ENCODE measurements at regions of chr5 and their contacts with region 1.

Region 1: GRCh38 chr5:95808686-95809413 is 13.7 kb downstream of the GLRX start:
- DNase-seq: peak; percentile 95
- ATAC-seq: peak; percentile 100
- H3K4me3 ChIP-seq: peak overlapping the region in 3 of 5 experiments; percentile 27 to 39 (median 33)
- H3K4me3 Mint-ChIP-seq: peak overlapping the region; percentile 86
- H3K27ac ChIP-seq: peak overlapping the region; percentile 81 to 97
- H3K27ac Mint-ChIP-seq: peak overlapping the region; percentile 97
- H3K4me1 ChIP-seq: peaks cover 34 to 37% of the 10 kb centered on the region in 2 donors
- H3K4me1 Mint-ChIP-seq: peaks cover 58% of the 10 kb centered on the region
- H3K27me3 ChIP-seq: no peaks in the 10 kb centered on the region
- H3K27me3 Mint-ChIP-seq: no peaks in the 10 kb centered on the region
- CTCF ChIP-seq: no peak

Region 2: DNA sequence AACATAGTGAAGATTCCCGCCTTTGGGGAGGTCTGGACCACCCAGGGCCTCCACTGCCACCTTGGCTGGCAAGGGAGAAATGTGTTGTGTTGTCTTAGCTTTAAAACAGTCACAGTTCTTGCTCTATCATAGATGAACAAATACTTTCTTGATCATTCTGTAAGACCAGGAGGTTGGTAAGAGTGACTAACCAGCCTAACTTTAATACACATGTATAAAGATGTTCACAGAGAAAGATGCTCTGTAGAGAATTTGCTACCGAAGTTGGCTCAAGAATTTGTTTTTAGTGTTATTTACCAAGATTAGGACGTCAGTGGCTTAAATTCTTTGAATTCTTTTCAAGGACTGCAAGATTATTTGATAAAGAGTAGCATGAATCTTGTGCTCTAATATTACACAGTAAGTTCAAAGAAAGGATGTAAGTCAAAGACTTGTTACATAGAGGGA is 14.8 kb before region 1 on chr5:
- CTCF ChIA-PET with region 1: interaction called, 3 read pairs
- POLR2A ChIA-PET with region 1: interaction called, 11 read pairs
- intact Hi-C with region 1: no loop called
- DNase-seq: no peak
- ATAC-seq: no peak
- H3K4me3 ChIP-seq: no peak overlapping the region
- H3K4me3 Mint-ChIP-seq: no peak overlapping the region
- H3K27ac ChIP-seq: no peak overlapping the region
- H3K27ac Mint-ChIP-seq: no peak overlapping the region
- H3K4me1 ChIP-seq: no peaks in the 10 kb centered on the region
- H3K4me1 Mint-ChIP-seq: peaks cover 4% of the 10 kb centered on the region
- H3K27me3 ChIP-seq: no peaks in the 10 kb centered on the region
- H3K27me3 Mint-ChIP-seq: no peaks in the 10 kb centered on the region
- CTCF ChIP-seq: no peak

Region 3: GRCh38 chr5:95822542-95823181 is 13.8 kb after region 1 on chr5 and contains the start of gene GLRX:
- CTCF ChIA-PET with region 1: interaction called, 68 read pairs
- POLR2A ChIA-PET with region 1: interaction called, 36 read pairs
- intact Hi-C with region 1: loop called (anchors 1 kb)
- DNase-seq: peak; percentile 63
- ATAC-seq: peak; percentile 41
- H3K4me3 ChIP-seq: peak within 1 kb of the TSS; percentile 70 to 100 (median 97)
- H3K4me3 Mint-ChIP-seq: peak within 1 kb of the TSS; percentile 99
- H3K27ac ChIP-seq: peak within 1 kb of the TSS; percentile 67 to 90
- H3K27ac Mint-ChIP-seq: peak within 1 kb of the TSS; percentile 99
- H3K4me1 ChIP-seq: peaks cover 52 to 59% of the 10 kb centered on the region in 2 donors
- H3K4me1 Mint-ChIP-seq: peaks cover 70% of the 10 kb centered on the region
- H3K27me3 ChIP-seq: no peaks in the 10 kb centered on the region
- H3K27me3 Mint-ChIP-seq: no peaks in the 10 kb centered on the region
- CTCF ChIP-seq: no peak
- total RNA-seq, gene GLRX: 44.6 and 50.0 TPM in 2 replicates